ENCODE measurements at regions of chr11 and their contacts with region 1.

Region 1: DNA sequence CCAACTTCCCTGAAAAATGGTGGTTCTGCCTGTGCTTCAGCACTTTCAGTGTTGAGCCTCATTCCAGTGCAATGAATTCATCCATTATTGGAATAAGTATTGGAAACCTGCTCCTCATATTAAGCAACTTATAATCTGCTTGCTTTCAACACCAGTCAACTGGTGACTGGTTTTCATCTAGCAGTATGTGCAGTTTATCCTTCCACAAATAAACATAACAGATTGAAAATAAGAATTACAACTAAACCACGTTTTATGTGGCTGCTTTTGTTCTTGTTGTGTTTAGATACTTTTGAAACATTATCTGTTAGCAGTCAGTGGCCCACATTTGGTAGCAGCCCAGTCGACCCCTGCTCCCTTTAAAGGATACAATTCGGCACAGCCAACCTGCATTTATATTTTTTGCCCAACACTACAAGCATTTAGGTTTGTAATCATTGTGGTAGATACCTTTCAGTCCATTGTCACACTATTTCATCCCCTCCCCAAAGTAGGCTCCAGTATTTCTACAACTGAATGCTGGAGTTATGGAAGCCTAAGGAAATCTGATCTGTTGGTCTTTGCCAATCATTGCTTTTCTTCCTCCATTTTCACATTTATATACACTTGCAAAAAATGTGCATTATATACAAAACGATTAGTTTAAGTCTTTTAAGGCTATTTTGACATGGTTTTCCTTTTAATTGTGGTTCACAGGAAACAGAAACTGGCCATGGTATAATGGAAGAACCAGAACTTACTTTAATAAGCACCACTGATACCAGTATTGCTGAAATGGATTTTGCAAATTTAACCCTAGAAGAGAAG is 13.1 kb downstream of the TAF1D start:
- DNase-seq: no peak
- ATAC-seq: no peak
- H3K4me3 ChIP-seq: no peak overlapping the region
- H3K27ac ChIP-seq: peak overlapping the region in 3 of 10 donors; percentile 0 to 1 (median 0)
- H3K4me1 ChIP-seq: peaks cover 0 to 14% (median 0%) of the 10 kb centered on the region in 9 donors
- H3K27me3 ChIP-seq: no peaks in the 10 kb centered on the region
- CTCF ChIP-seq: no peak

Region 2: GRCh38 chr11:93672280-93672679 is 55.9 kb before region 1 on chr11:
- intact Hi-C with region 1: loop called in 2 of 10 experiments (anchors 10 kb)
- DNase-seq: no peak
- ATAC-seq: no peak
- H3K4me3 ChIP-seq: no peak overlapping the region
- H3K27ac ChIP-seq: no peak overlapping the region
- H3K4me1 ChIP-seq: no peaks in the 10 kb centered on the region
- H3K27me3 ChIP-seq: no peaks in the 10 kb centered on the region
- CTCF ChIP-seq: no peak

Region 3: GRCh38 chr11:93929407-93929806 is 201.2 kb after region 1 on chr11:
- intact Hi-C with region 1: no loop called
- DNase-seq: no peak
- ATAC-seq: no peak
- H3K4me3 ChIP-seq: no peak overlapping the region
- H3K27ac ChIP-seq: no peak overlapping the region
- H3K4me1 ChIP-seq: no peaks in the 10 kb centered on the region
- H3K27me3 ChIP-seq: peaks cover 0 to 3% (median 0%) of the 10 kb centered on the region in 7 donors
- CTCF ChIP-seq: no peak